Esophagus squamous epithelium (tissue), 5 donors: ENCODE measurements at regions of chr10 and their contacts with region 1.

Region 1: GRCh38 chr10:84537447-84537931 is 209.1 kb downstream of the CCSER2 start:
- DNase-seq: no peak
- H3K4me3 ChIP-seq: no peak overlapping the region
- H3K27ac ChIP-seq: no peak overlapping the region
- H3K4me1 ChIP-seq: peaks cover 9 to 19% (median 11%) of the 10 kb centered on the region in 3 donors
- H3K27me3 ChIP-seq: peaks cover 0 to 41% (median 0%) of the 10 kb centered on the region in 4 donors
- CTCF ChIP-seq: peak; percentile 66 to 90 (median 86)
- POLR2A ChIP-seq: no peak

Region 2: DNA sequence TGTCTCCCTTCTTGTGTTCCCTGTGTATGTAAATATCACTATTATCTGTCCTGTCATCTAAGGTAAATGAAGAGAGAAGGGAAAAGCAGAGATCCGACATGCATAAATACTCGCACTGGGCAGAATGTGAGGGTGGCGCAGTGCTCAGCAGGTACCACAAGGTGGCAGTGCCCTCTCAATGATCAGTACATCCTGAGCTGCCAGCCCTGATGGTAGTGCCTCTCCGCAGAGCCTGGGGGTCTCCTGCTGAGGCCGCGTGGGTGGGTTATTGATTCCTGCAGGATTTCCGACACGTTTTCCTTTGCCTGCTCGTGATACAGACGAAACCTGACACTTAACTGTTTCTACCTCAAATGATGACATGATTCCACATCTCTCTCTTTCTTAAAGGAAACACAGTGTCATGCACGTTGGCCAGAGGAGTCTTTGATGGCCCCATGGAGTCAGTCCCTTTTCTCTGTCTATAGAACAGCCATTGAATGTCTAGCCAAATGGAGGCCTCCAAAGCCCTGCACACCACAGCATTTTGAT is 272.8 kb before region 1 on chr10:
- intact Hi-C with region 1: loop called (anchors 5 kb)
- DNase-seq: no peak
- H3K4me3 ChIP-seq: no peak overlapping the region
- H3K27ac ChIP-seq: no peak overlapping the region
- H3K4me1 ChIP-seq: no peaks in the 10 kb centered on the region
- H3K27me3 ChIP-seq: peaks cover 0 to 31% (median 0%) of the 10 kb centered on the region in 4 donors
- CTCF ChIP-seq: peak; percentile 73 to 95 (median 85)
- POLR2A ChIP-seq: no peak

Region 3: GRCh38 chr10:84375011-84375410 is 162.5 kb before region 1 on chr10:
- intact Hi-C with region 1: loop called (anchors 5 kb)
- DNase-seq: no peak
- H3K4me3 ChIP-seq: no peak overlapping the region
- H3K27ac ChIP-seq: no peak overlapping the region
- H3K4me1 ChIP-seq: peaks cover 0 to 7% (median 0%) of the 10 kb centered on the region in 3 donors
- H3K27me3 ChIP-seq: no peaks in the 10 kb centered on the region
- CTCF ChIP-seq: peak; percentile 43 to 76 (median 72)
- POLR2A ChIP-seq: no peak

Region 4: GRCh38 chr10:84429926-84430520 is 107.5 kb before region 1 on chr10:
- intact Hi-C with region 1: loop called (anchors 10 kb)
- DNase-seq: no peak
- H3K4me3 ChIP-seq: no peak overlapping the region
- H3K27ac ChIP-seq: peak overlapping the region in 2 of 4 donors; percentile 24 to 36
- H3K4me1 ChIP-seq: peaks cover 5 to 57% (median 10%) of the 10 kb centered on the region in 3 donors
- H3K27me3 ChIP-seq: no peaks in the 10 kb centered on the region
- CTCF ChIP-seq: peak in 5 of 6 experiments; percentile 62 to 82 (median 65)
- POLR2A ChIP-seq: no peak

Region 5: GRCh38 chr10:84654671-84655070 is 117.2 kb after region 1 on chr10:
- intact Hi-C with region 1: no loop called
- DNase-seq: no peak
- H3K4me3 ChIP-seq: no peak overlapping the region
- H3K27ac ChIP-seq: no peak overlapping the region
- H3K4me1 ChIP-seq: no peaks in the 10 kb centered on the region
- H3K27me3 ChIP-seq: no peaks in the 10 kb centered on the region
- CTCF ChIP-seq: no peak
- POLR2A ChIP-seq: no peak

Region 6: GRCh38 chr10:84783386-84783785 is 245.9 kb after region 1 on chr10:
- intact Hi-C with region 1: no loop called
- DNase-seq: no peak
- H3K4me3 ChIP-seq: no peak overlapping the region
- H3K27ac ChIP-seq: no peak overlapping the region
- H3K4me1 ChIP-seq: no peaks in the 10 kb centered on the region
- H3K27me3 ChIP-seq: no peaks in the 10 kb centered on the region
- CTCF ChIP-seq: peak in 5 of 6 experiments; percentile 20 to 52 (median 35)
- POLR2A ChIP-seq: no peak